SK-N-SH (cell line): ENCODE measurements at regions of chr6 and their contacts with region 1.

Region 1: GRCh38 chr6:41463062-41463930 is 82.9 kb upstream of the FOXP4 start:
- DNase-seq: peak; percentile 83
- H3K4me3 ChIP-seq: no peak overlapping the region; a peak in 1 of 4 replicates
- H3K27ac ChIP-seq: no peak overlapping the region
- H3K4me1 ChIP-seq: peaks cover 0 to 5% of the 10 kb centered on the region in 2 experiments; a peak in 1 of 4 replicates
- H3K27me3 ChIP-seq: no peaks in the 10 kb centered on the region
- CTCF ChIP-seq: peak; percentile 71
- EP300 ChIP-seq: no peak
- RAD21 ChIP-seq: peak; percentile 93

Region 2: DNA sequence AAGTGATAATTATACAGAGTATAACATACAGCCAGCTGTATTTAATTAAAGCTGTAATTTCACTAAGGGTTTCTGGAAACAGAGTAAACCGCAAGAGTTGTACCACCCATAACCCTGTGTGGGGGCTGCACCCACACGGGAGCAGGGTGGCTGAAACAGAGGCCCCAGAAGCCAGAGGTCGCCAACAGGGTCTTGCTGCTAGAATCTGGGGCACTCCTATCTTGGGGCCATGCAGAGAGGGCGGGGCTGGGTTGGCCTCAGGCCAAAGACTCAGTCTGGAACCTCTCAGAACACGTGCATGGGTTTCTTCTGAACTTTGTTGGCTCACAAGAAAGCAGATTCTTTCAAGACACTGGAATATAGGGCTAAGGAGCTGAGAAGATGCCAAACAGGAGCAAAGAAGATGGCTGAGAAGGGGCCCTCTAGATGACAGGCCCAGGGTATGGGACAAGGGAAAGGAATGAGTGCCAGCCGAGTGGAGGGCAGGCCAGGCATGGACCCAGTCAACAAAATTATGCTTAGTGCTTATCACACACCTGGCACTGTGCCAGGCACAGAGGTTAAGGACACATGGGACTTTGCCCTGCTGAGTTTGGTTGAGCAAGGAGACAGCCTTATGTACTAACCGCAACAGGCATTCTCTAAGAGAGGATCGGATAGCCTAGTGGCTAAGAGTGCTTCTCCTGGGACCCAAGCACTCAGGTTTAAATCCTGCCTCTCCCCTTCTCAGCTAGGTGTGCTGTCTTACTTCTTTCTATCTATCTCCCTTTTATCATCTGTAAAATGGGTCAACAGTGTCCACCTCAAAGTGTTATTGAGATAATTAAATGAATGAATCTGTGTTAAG is 13.7 kb before region 1 on chr6:
- CTCF ChIA-PET with region 1: interaction called, 24 read pairs
- POLR2A ChIA-PET with region 1: no interaction called
- DNase-seq: no peak
- H3K4me3 ChIP-seq: no peak overlapping the region
- H3K27ac ChIP-seq: no peak overlapping the region; a peak in 1 of 4 replicates
- H3K4me1 ChIP-seq: peaks cover 0 to 20% of the 10 kb centered on the region in 2 experiments; a peak in 1 of 4 replicates
- H3K27me3 ChIP-seq: peaks cover 4% of the 10 kb centered on the region; the same call in 1 of the 2 replicates
- CTCF ChIP-seq: no peak
- EP300 ChIP-seq: no peak
- RAD21 ChIP-seq: no peak

Region 3: DNA sequence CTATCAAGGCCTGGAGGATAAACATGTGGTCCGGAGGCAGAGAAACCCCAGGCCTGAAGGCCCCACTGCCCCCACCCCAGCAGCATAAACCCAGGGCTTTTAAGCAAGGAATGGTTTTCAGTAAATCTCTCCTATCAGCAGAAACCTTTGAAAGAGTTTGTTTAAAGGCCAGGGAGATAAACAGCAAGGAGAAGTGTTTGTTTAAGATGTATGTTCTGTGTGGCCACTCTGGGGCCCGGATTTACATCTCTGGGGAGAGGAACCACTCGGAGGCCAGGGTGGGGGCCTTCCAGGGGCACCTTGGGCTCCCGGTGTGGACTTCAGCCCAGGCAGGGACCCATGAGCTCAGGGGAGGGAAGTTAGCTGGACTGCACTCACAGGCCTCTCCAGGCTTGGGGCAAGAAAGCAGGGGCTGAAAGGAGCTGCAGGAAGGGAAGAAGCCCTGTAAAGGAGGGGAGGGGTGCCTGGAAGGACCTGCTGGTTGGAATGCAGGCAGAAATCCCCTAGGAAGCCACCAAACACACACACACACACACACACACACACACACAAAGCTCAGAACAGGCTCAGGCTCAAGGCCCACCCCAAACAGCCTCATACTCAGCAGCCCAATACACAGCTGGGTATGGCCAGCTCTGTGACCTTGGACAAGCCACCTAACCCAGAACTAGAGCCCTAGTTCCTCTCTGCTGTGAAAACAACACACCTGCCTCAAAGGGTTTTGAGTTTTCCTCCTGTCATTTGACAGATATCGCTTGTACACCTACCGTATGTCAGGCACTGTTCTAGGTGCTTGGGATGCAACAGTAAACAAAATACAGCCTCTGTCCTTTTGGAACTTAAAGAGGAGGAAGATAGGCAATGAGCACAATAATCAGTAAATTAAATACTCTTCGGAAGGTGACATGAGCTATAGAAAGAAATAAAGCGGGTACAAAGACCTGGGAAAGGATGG is 56.7 kb after region 1 on chr6:
- CTCF ChIA-PET with region 1: no interaction called
- POLR2A ChIA-PET with region 1: no interaction called
- DNase-seq: peak; percentile 71
- H3K4me3 ChIP-seq: no peak overlapping the region
- H3K27ac ChIP-seq: peak overlapping the region in 1 of 2 experiments; percentile 19; a peak in 1 of 4 replicates
- H3K4me1 ChIP-seq: peaks cover 0 to 13% of the 10 kb centered on the region in 2 experiments; a peak in 1 of 4 replicates
- H3K27me3 ChIP-seq: no peaks in the 10 kb centered on the region; the same call in 1 of the 2 replicates
- CTCF ChIP-seq: no peak
- EP300 ChIP-seq: no peak
- RAD21 ChIP-seq: no peak

Region 4: DNA sequence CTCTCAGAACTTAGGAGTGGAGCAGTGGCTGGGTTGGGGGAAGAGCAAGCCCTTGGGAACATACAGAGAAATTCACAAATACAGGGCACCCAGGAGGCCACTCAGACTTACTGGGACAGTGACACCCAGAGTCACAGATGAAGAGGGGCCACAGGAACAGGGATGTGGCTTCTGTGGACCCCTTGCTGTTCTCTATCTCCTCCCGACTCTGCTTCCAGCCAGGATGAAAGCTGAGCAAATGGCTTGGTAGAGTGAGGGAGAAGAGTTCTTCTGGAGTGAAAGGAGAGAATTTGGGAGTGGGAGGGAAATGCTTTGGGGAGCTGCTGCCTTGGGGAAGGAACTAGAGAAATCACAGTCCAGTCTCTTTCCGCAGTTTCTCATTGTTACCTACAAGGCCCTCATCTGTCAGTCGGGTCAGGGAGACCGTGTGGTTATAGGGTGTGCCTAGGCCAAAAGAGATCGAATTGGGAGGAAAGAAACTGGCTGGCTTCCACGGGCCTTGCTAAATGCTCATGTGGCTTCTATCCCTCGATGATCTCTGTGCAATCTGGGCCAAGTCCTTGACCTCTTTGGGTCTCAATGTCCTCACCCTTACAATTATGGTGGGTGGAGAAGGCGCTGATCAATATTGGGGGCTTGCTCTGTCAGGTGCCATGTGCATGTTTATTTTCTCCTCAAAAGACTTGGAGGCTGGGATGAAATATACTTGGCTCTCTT is 99.9 kb after region 1 on chr6:
- CTCF ChIA-PET with region 1: no interaction called
- POLR2A ChIA-PET with region 1: no interaction called
- DNase-seq: no peak
- H3K4me3 ChIP-seq: no peak overlapping the region
- H3K27ac ChIP-seq: no peak overlapping the region
- H3K4me1 ChIP-seq: peaks cover 4 to 6% of the 10 kb centered on the region in 2 experiments; a peak in 2 of 4 replicates
- H3K27me3 ChIP-seq: no peaks in the 10 kb centered on the region
- CTCF ChIP-seq: no peak
- EP300 ChIP-seq: no peak
- RAD21 ChIP-seq: no peak

Region 5: GRCh38 chr6:41581381-41581991 is 118.2 kb after region 1 on chr6:
- CTCF ChIA-PET with region 1: interaction called, 183 read pairs
- POLR2A ChIA-PET with region 1: no interaction called
- DNase-seq: peak; percentile 63
- H3K4me3 ChIP-seq: 0 out of 4 replicates have a peak overlapping the region, but pooled peaks of 1 of the 2 experiments have one; percentile 1
- H3K27ac ChIP-seq: peak overlapping the region; percentile 60 to 93
- H3K4me1 ChIP-seq: peaks cover 30 to 49% of the 10 kb centered on the region in 2 experiments; a peak in 3 of 4 replicates
- H3K27me3 ChIP-seq: no peaks in the 10 kb centered on the region
- CTCF ChIP-seq: no peak
- EP300 ChIP-seq: peak in 1 of 2 experiments; percentile 61; a peak in 1 of 4 replicates
- RAD21 ChIP-seq: no peak

Region 6: GRCh38 chr6:41644297-41644879 is 181.1 kb after region 1 on chr6:
- CTCF ChIA-PET with region 1: no interaction called
- POLR2A ChIA-PET with region 1: no interaction called
- DNase-seq: no peak
- H3K4me3 ChIP-seq: no peak overlapping the region
- H3K27ac ChIP-seq: no peak overlapping the region
- H3K4me1 ChIP-seq: peaks cover 4 to 27% of the 10 kb centered on the region in 2 experiments; a peak in 2 of 4 replicates
- H3K27me3 ChIP-seq: no peaks in the 10 kb centered on the region
- CTCF ChIP-seq: no peak
- EP300 ChIP-seq: no peak
- RAD21 ChIP-seq: no peak